Prostate gland (tissue), 2 donors: ENCODE measurements at regions of chr19 and their contacts with region 1.

Region 1: DNA sequence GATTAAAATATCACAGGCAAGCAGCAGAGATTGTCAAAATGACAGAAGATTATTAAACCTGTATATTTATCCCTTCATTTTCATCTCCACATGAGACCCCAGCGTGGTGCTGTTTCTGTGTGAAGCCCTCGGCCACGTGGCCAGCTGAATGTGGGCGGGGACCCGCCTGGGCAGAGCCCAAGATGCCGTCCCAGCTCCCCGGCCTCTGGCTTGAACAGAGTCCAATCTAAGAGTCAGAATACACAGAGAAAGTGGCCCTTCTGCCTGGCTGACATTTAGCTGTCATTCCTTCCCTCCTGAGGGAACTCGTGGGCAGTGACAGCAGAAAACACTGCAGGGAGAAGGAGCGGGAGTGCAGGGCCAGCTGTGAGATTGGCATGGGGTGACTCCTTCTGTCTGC is 34.9 kb upstream of the UQCRFS1 start:
- DNase-seq: no peak
- H3K4me3 ChIP-seq: no peak overlapping the region
- H3K27ac ChIP-seq: no peak overlapping the region
- H3K4me1 ChIP-seq: no peaks in the 10 kb centered on the region
- H3K27me3 ChIP-seq: no peaks in the 10 kb centered on the region
- CTCF ChIP-seq: no peak
- POLR2A ChIP-seq: no peak

Region 2: DNA sequence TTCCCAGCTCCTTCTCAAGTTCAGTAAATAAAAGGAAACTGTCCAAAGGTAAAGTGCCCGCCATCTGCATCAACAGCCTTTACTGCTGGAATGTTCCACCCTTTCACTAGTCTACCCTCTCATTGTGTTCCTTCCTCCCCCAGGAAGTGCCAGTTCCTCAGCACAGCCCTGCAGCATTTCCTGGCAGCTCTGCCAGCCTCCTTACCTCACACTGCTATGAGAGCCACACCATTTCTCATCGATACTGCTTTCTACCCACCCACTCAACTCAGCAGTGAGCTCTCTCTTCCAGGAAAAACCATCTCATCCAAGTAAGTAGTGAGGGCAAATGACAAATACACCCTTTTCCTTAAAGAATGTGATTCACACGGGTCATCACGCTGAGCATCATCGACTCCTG is 54.8 kb before region 1 on chr19:
- intact Hi-C with region 1: loop called (anchors 10 kb)
- DNase-seq: no peak
- H3K4me3 ChIP-seq: no peak overlapping the region
- H3K27ac ChIP-seq: no peak overlapping the region
- H3K4me1 ChIP-seq: no peaks in the 10 kb centered on the region
- H3K27me3 ChIP-seq: no peaks in the 10 kb centered on the region
- CTCF ChIP-seq: no peak
- POLR2A ChIP-seq: no peak

Region 3: DNA sequence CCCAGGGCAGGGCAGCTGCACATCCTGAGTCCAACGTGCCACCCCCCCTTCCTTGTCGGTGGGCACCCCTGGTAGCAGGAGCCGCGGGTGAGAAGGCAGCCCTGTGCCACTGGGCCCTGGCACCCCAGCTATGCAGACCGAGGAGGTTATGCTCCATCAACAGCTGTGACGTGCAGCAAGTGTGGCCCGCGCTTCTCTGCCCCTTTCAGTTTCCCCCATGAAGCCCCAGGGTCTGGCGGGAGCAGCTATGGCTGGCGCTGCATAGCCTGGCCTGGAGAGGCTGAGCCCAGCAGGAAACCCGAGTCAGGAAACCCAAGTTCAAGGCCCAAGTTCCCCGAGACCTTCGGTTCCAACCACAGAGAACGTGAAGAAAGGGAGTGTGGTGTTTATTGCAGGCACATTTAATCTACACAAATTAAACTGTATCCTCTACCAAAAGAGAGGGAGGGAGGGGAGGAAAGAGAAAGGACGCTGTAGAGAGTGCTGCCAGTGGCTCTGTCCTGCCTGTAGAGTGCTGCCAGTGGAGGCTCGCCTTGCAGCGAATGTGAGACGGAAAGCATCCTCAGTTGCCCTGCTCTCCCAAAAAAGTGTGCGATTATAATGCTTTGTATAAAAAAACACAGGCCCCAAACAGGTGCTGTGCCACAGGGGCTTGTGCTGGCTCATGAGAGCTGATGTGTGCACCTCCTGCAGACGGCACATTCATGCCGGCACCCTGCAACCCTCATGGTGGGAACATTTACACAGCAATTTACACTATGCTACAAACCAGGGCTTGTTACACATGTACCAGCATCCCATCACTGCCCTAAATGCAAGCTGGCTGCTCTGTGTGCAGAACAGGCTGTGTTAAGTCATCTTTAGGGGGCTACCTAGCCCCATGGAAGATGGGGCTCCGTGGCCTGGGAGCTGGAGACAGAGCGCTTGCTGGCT is 374.5 kb after region 1 on chr19:
- intact Hi-C with region 1: no loop called
- DNase-seq: no peak
- H3K4me3 ChIP-seq: no peak overlapping the region
- H3K27ac ChIP-seq: no peak overlapping the region
- H3K4me1 ChIP-seq: no peaks in the 10 kb centered on the region
- H3K27me3 ChIP-seq: no peaks in the 10 kb centered on the region
- CTCF ChIP-seq: no peak
- POLR2A ChIP-seq: no peak